Gastrocnemius medialis (tissue), 4 donors: ENCODE measurements at regions of chr19 and their contacts with region 1.

Region 1: DNA sequence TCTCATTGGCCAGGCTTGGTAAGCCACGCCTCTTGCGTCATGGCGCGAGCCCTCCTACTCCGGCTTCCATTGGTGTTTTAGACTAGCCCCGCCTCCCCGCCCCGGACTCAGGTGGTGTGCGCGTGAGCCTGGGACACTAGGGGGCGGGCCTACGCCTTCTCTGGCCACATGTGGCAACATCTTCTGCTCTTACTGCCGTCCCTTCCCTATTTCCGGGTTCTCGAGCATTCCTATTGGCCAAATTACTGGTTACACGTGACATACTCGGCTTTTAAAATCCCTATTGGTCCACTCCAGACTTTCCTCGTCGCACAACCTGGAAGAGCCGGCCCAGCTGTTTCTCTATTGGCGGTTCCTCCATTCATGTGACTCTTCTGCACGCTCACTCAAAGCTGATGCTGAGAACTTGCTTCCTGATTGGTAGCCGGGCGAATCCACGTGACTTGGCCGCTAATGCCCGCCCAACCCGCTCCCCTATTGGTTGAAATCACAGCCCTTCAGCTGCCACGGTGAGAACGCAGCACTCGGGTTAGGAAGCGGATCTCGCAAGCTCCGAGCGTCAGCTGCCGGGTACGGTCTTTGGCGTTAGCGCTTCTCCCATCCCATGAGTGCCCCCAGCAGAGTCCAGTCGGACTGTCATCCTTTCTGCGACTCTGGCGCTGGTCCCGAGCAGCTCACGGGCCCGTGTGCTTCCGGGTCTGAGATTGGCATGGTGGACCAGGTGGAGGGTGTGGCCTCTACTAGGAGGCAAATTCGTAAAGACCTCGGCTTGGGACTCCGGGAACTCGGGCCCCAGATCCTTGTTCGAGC is at the start of gene BLOC1S3:
- DNase-seq: peak; percentile 100
- ATAC-seq: peak; percentile 94 to 96
- H3K4me3 ChIP-seq: peak within 1 kb of the TSS; percentile 82 to 93 (median 87)
- H3K27ac ChIP-seq: peak within 1 kb of the TSS; percentile 98 to 100 (median 99)
- H3K4me1 ChIP-seq: peaks cover 16 to 25% of the 10 kb centered on the region in 2 donors
- H3K27me3 ChIP-seq: no peaks in the 10 kb centered on the region
- CTCF ChIP-seq: peak in 4 of 5 experiments; percentile 2 to 39 (median 30)
- POLR2A ChIP-seq: peak; percentile 84 to 94
- total RNA-seq, gene BLOC1S3: 1.9 to 14.9 (median 5.8) TPM

Region 2: GRCh38 chr19:44890366-44891015 is 288.0 kb before region 1 on chr19:
- in situ Hi-C with region 1: no loop called
- intact Hi-C with region 1: loop called (anchors 1 kb)
- DNase-seq: peak; percentile 100
- ATAC-seq: peak; percentile 92 to 95
- H3K4me3 ChIP-seq: peak overlapping the region; percentile 67 to 81 (median 74)
- H3K27ac ChIP-seq: peak overlapping the region; percentile 92 to 95 (median 94)
- H3K4me1 ChIP-seq: peaks cover 18 to 23% of the 10 kb centered on the region in 2 donors
- H3K27me3 ChIP-seq: no peaks in the 10 kb centered on the region
- CTCF ChIP-seq: no peak
- POLR2A ChIP-seq: peak; percentile 31 to 43

Region 3: DNA sequence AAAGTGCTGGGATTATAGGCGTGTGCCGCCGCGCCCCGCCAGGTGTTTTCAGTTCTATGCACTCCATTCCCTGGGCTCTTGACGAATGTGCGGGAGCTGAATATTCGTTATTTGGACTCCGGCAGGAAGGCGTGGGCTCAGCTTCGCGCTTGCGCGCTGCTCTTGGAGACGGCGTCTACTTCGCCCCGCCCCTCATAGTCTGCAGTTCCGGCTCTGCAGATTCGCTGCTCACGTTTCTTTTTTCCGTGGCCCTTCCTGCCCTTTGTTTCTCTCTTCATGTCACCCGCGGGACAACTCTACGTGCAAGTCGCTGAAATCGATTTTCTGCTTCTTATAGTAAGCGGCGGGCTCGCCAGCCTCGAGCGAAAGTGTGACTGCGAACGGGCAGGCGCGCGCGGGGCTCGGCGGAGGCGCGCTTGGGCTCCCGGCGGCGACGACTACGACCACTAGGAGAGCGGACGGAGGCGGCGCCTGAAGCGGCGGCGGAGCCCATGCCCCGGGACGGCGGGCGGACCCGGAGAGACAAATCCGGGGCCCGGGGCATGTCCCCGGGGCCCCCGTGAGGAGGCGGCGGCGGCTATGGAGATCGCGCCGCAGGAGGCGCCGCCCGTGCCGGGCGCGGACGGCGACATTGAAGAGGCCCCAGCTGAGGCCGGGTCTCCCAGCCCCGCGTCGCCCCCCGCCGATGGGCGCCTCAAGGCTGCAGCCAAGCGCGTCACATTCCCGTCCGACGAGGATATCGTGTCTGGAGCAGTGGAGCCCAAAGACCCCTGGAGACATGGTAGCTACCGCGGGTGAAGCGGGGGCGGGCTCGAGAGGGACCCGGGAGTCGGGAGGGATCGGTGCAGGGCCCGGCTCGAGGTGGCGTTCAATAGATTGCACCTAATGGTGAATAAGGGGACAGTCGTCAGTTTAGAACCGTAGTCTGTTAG is 85.5 kb before region 1 on chr19 and contains the start of gene PPP1R37:
- in situ Hi-C with region 1: no loop called
- intact Hi-C with region 1: loop called (anchors 1 kb)
- DNase-seq: peak; percentile 91 to 93
- ATAC-seq: peak; percentile 88 to 92
- H3K4me3 ChIP-seq: peak within 1 kb of the TSS; percentile 71 to 98 (median 84)
- H3K27ac ChIP-seq: peak within 1 kb of the TSS; percentile 90 to 96 (median 90)
- H3K4me1 ChIP-seq: peaks cover 53 to 55% of the 10 kb centered on the region in 2 donors
- H3K27me3 ChIP-seq: no peaks in the 10 kb centered on the region
- CTCF ChIP-seq: peak; percentile 46 to 70 (median 59)
- POLR2A ChIP-seq: peak; percentile 65 to 71
- total RNA-seq, gene PPP1R37: 30.5 to 51.1 (median 39.7) TPM

Region 4: DNA sequence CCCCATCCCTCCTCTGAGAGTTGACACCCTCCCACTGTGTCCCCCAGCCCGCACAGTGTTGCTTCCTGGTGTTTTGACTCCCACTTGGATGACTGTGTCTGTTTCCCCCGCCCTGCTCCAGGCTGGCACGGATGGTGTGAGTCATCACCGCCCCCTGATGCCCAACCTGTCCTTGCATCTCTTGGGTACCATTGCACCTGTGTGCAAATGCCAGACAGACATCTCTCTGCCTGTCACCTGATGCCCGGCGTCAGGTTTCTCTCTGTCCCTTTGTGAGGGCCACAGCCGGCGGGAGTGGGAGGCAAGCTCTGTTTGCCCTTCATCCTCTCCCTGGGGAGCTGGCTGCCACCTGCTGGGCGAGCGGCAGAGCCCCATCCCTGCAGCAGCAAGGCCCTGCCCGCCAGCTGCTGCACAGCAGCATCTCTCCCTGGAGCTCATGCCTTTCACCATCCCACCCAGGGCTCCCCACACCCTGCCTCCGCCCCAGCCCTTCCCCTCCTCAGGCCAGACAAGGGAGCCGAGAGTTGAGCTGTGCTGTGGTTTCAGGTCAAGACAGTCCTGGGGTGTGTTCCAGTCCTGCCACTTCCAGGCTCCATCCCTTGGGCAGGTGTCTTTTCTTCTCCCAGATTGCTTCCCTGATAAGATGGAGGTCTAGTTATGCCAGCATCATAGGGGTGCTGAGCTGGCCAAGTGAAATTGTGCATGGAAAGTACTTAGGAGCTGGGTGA is 47.4 kb before region 1 on chr19:
- in situ Hi-C with region 1: no loop called
- intact Hi-C with region 1: no loop called
- DNase-seq: no peak
- ATAC-seq: peak in 1 of 2 donors; percentile 48
- H3K4me3 ChIP-seq: no peak overlapping the region
- H3K27ac ChIP-seq: no peak overlapping the region
- H3K4me1 ChIP-seq: no peaks in the 10 kb centered on the region
- H3K27me3 ChIP-seq: no peaks in the 10 kb centered on the region
- CTCF ChIP-seq: peak in 4 of 5 experiments; percentile 25 to 43 (median 28)
- POLR2A ChIP-seq: no peak

Region 5: DNA sequence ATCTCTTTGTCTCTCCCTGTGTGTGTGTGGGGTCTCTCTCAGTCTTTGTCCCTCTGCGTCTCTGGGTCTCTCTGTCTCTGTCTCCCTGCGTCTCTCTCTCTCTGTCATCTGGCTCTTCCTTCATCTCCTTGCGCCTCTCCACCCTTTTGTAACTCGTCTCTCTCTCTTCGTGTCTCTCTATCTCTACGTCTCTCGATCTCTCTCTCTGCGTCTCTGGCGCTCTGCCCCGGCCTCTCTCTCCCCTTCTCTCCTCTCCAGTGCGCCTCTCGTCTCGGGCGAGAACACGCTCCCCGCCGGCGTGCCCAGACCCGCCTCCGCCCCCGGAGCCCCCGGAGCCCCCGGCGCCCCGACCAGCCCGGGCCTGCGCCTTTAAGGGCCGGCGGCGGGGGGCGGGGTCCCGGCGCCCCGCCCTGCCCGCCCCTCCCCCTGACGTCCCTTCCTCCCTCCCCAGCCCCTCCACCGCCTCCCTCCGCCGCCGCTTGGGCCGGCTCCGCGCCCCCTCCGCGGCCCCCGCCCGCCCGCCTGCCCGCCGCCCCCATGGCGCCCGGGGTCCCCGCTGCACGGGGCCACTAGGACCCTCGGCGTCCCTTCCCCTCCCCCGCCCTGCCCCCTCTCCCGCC is 72.5 kb after region 1 on chr19 and contains the start of gene MARK4:
- in situ Hi-C with region 1: no loop called
- intact Hi-C with region 1: loop called (anchors 2 kb)
- DNase-seq: peak; percentile 11 to 38
- ATAC-seq: peak; percentile 73 to 78
- H3K4me3 ChIP-seq: peak within 1 kb of the TSS; percentile 80 to 91 (median 86)
- H3K27ac ChIP-seq: peak within 1 kb of the TSS; percentile 76 to 89 (median 80)
- H3K4me1 ChIP-seq: peaks cover 23 to 26% of the 10 kb centered on the region in 2 donors
- H3K27me3 ChIP-seq: no peaks in the 10 kb centered on the region
- CTCF ChIP-seq: peak in 1 of 5 experiments; percentile 7
- POLR2A ChIP-seq: peak; percentile 31 to 48
- total RNA-seq, gene MARK4: 12.2 to 42.5 (median 22.1) TPM

Region 6: DNA sequence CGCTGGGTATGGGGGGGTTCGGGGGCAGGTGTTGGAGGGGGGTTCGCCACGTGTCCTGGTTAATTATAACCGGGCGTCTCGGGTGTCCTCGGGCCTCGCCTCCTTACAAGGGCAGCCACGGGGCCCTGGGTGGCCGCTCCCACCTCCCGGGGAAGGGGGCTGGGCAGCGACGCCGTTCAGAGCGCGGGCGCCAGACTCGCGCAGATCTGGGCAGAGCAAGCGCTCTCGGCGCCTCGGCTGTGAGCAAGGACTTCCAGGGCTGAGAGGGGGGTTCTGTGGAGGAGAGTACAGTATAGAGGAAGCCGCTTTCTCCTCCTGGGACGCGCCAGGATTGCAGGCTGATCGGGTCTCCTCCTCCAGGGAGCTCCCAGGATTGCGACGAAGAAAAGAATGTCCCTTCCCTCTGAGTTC is 145.2 kb after region 1 on chr19:
- in situ Hi-C with region 1: no loop called
- intact Hi-C with region 1: loop called (anchors 2 kb)
- DNase-seq: peak; percentile 72 to 96
- ATAC-seq: peak; percentile 30 to 45
- H3K4me3 ChIP-seq: peak overlapping the region; percentile 45 to 76 (median 58)
- H3K27ac ChIP-seq: peak overlapping the region; percentile 97 to 100 (median 100)
- H3K4me1 ChIP-seq: peaks cover 49 to 67% of the 10 kb centered on the region in 2 donors
- H3K27me3 ChIP-seq: no peaks in the 10 kb centered on the region
- CTCF ChIP-seq: no peak
- POLR2A ChIP-seq: peak; percentile 94 to 95

Region 7: DNA sequence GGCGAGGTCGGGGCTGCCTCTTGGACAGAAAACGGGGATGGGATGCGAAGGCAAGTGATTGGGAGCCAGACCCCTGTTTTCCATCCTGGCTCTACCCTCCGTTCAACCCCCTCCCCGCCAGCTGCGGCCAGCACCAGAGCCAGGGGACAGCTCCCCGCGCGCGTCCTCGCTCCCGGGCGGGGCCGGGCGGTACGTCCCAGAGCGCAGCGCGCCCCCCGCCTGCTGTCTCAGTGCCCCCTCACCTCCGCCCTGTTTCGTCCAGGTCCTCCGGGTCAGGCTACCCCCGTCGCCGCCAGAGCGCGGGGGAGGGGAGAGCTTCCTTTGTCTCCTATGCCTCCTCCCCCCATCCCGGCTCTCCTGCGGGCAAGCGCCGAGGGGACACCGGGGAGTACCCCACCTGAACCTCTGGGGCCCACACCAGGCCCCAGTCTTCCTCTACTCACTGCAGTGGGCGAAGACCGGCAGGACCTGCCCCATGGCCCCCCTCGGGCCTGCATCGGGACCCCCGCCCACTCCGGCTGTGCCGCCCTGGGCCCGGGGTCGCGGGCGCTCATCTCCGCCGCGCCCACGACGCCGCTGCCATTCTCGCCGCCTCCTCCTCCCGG is 318.0 kb after region 1 on chr19:
- in situ Hi-C with region 1: no loop called
- intact Hi-C with region 1: loop called (anchors 5 kb)
- DNase-seq: no peak
- ATAC-seq: peak; percentile 11 to 19
- H3K4me3 ChIP-seq: peak overlapping the region; percentile 75 to 83 (median 80)
- H3K27ac ChIP-seq: peak overlapping the region; percentile 55 to 68 (median 60)
- H3K4me1 ChIP-seq: peaks cover 33 to 35% of the 10 kb centered on the region in 2 donors
- H3K27me3 ChIP-seq: peaks cover 4 to 30% (median 9%) of the 10 kb centered on the region in 3 donors
- CTCF ChIP-seq: peak in 1 of 5 experiments; percentile 10
- POLR2A ChIP-seq: peak in 1 of 2 donors; percentile 17

Region 8: GRCh38 chr19:46068345-46069258 is 890.1 kb after region 1 on chr19:
- in situ Hi-C with region 1: no loop called
- intact Hi-C with region 1: no loop called
- DNase-seq: no peak
- ATAC-seq: no peak
- H3K4me3 ChIP-seq: no peak overlapping the region
- H3K27ac ChIP-seq: no peak overlapping the region
- H3K4me1 ChIP-seq: no peaks in the 10 kb centered on the region
- H3K27me3 ChIP-seq: peaks cover 0 to 17% (median 11%) of the 10 kb centered on the region in 3 donors
- CTCF ChIP-seq: no peak
- POLR2A ChIP-seq: no peak